Prostate gland (tissue), 2 donors: ENCODE measurements at regions of chr1 and their contacts with region 1.

Region 1: GRCh38 chr1:2875707-2876561 is 74.4 kb upstream of the TTC34 start:
- DNase-seq: peak; percentile 7
- H3K4me3 ChIP-seq: no peak overlapping the region
- H3K27ac ChIP-seq: no peak overlapping the region
- H3K4me1 ChIP-seq: peaks cover 7% of the 10 kb centered on the region
- H3K27me3 ChIP-seq: no peaks in the 10 kb centered on the region
- CTCF ChIP-seq: peak in 2 of 4 experiments; percentile 18 to 50
- POLR2A ChIP-seq: no peak

Region 2: GRCh38 chr1:3428899-3429298 is 553.0 kb after region 1 on chr1:
- intact Hi-C with region 1: loop called (anchors 5 kb)
- DNase-seq: no peak
- H3K4me3 ChIP-seq: no peak overlapping the region
- H3K27ac ChIP-seq: no peak overlapping the region
- H3K4me1 ChIP-seq: no peaks in the 10 kb centered on the region
- H3K27me3 ChIP-seq: peaks cover 4% of the 10 kb centered on the region
- CTCF ChIP-seq: no peak
- POLR2A ChIP-seq: no peak